Endothelial cell of umbilical vein (primary cell): ENCODE measurements at regions of chr3 and their contacts with region 1.

Region 1: GRCh38 chr3:50254577-50255250 is 14.2 kb upstream of the SEMA3B start:
- DNase-seq: peak; percentile 91
- H3K4me3 ChIP-seq: no peak overlapping the region
- H3K27ac ChIP-seq: peak overlapping the region; percentile 98
- H3K4me1 ChIP-seq: peaks cover 64% of the 10 kb centered on the region
- H3K27me3 ChIP-seq: no peaks in the 10 kb centered on the region
- CTCF ChIP-seq: no peak
- POLR2A ChIP-seq: peak; percentile 42

Region 2: GRCh38 chr3:50235716-50236496 is 18.8 kb before region 1 on chr3 and contains the start of gene GNAI2:
- CTCF ChIA-PET with region 1: interaction called, 98 read pairs
- POLR2A ChIA-PET with region 1: interaction called, 4 read pairs
- dilution Hi-C with region 1: no loop called
- intact Hi-C with region 1: loop called (anchors 1 kb)
- DNase-seq: peak; percentile 99
- H3K4me3 ChIP-seq: peak within 1 kb of the TSS; percentile 80 to 88 (median 81)
- H3K27ac ChIP-seq: peak within 1 kb of the TSS; percentile 60
- H3K4me1 ChIP-seq: peaks cover 27% of the 10 kb centered on the region
- H3K27me3 ChIP-seq: no peaks in the 10 kb centered on the region
- CTCF ChIP-seq: no peak
- POLR2A ChIP-seq: peak; percentile 98
- total RNA-seq, gene GNAI2: 767 and 773 TPM in 2 replicates

Region 3: DNA sequence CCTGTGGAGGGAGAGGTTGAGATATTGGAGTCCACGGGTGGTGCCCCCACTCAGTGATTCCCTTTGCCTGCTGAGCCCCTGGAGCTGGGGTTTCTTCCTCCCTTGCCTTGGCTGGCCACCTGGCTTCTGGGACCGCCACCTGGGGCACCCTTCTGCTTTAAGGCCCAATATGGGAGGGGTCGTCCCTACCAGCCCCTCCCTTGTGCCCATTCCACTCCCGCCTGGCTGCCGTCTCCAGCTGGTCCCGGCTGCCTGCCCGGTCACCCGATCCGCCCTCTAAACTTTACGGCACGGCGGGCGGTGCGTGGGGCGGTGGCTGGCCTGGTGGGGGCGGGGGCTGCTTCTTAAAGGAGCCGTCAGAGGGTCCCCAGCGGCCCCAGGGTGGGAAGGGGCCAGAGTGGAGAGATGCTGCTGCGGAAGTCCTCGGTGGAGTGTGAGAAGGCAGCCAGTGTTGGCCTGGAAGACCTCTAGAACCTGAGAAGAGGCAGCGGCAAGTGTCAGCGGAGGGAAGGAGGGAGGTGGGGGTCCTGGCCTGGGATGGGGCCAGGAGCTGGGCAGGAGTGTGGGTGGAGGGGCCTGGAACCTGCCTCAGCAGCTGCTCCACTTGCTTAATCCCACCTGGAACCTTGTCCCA is 12.7 kb after region 1 on chr3:
- CTCF ChIA-PET with region 1: interaction called, 5 read pairs
- POLR2A ChIA-PET with region 1: no interaction called
- dilution Hi-C with region 1: no loop called
- intact Hi-C with region 1: loop called (anchors 2 kb)
- DNase-seq: no peak
- H3K4me3 ChIP-seq: no peak overlapping the region
- H3K27ac ChIP-seq: no peak overlapping the region
- H3K4me1 ChIP-seq: no peaks in the 10 kb centered on the region
- H3K27me3 ChIP-seq: peaks cover 3 to 6% of the 10 kb centered on the region in 2 experiments
- CTCF ChIP-seq: no peak
- POLR2A ChIP-seq: no peak

Region 4: DNA sequence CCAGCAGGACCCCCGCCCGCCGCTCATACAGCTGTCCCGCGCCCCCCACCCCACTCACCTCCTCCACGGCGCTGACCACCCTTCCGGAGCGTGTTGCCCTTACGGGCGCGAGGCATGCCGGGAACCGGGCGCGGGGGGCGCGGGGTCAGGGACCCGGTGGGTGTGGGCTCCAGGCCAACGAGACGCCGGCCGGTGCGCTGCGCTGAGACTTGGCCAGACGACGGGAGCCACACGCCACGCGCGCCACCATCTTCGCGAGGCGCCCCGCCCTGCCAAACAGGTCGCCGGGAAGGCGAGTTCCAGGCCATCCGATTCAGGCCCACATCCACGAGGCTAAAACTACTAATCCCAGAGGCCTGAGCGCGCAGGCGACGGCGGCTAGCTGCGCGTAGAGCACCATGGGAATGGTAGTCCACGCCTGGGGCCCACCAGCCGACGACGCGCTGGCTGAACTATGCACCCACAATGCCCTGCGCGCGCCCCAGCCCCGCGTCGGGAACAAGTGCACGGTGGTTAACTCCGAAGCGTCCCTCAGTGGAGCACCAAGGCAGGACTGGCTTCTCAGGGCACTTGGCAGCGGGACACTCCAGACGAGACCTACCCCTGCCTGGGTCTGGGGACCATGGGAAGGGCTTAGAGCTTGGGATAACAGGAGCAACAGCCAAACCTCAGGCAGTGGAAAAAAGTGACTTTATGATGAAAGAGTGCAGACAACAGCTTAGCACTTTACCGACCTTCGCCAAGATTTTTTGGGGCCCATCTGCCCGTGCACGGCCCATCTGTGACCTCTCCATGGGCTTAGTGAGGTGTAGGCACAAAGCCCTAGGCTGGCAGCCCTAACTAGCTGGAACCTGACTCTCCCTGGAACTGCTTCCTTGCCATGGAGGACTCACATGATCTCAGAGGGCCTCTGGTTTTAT is 37.7 kb after region 1 on chr3 and contains the start of gene IFRD2:
- CTCF ChIA-PET with region 1: no interaction called
- POLR2A ChIA-PET with region 1: no interaction called
- dilution Hi-C with region 1: no loop called
- intact Hi-C with region 1: loop called (anchors 1 kb)
- DNase-seq: peak; percentile 98
- H3K4me3 ChIP-seq: peak within 1 kb of the TSS; percentile 70 to 84 (median 76)
- H3K27ac ChIP-seq: peak within 1 kb of the TSS; percentile 53
- H3K4me1 ChIP-seq: peaks cover 11% of the 10 kb centered on the region
- H3K27me3 ChIP-seq: no peaks in the 10 kb centered on the region
- CTCF ChIP-seq: peak in 1 of 2 donors; percentile 6
- POLR2A ChIP-seq: peak; percentile 81
- total RNA-seq, gene IFRD2: 109 and 111 TPM in 2 replicates